ENCODE measurements at regions of chr2 and their contacts with region 1.

Region 1: GRCh38 chr2:223822818-223823217 is 14.6 kb downstream of the AP1S3 start:
- DNase-seq: no peak
- H3K4me3 ChIP-seq: no peak overlapping the region
- H3K27ac ChIP-seq: no peak overlapping the region
- H3K4me1 ChIP-seq: peaks cover 20% of the 10 kb centered on the region
- H3K27me3 ChIP-seq: no peaks in the 10 kb centered on the region
- CTCF ChIP-seq: no peak

Region 2: DNA sequence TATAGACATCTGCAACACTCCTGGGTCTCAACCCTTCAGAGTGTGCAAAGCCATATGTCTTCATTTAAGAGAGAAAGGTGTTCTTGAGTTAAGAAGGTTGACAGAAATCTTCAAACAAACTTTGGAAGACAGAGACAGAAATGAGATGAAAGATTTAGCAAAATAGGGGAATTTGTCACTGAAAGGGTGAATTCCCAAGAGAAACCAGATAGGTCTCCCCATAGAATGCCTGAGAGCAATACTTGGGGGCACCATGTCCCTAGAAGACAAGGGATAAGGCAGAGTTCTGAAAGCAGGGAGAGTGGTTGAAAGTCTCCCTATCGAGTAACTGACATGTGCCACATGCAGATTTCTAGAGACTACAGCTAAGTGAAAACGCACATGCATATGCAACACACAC is 35.5 kb before region 1 on chr2:
- CTCF ChIA-PET with region 1: no interaction called
- dilution Hi-C with region 1: no loop called
- in situ Hi-C with region 1: no loop called
- intact Hi-C with region 1: no loop called
- DNase-seq: no peak
- H3K4me3 ChIP-seq: no peak overlapping the region
- H3K27ac ChIP-seq: no peak overlapping the region
- H3K4me1 ChIP-seq: peaks cover 3% of the 10 kb centered on the region
- H3K27me3 ChIP-seq: no peaks in the 10 kb centered on the region
- CTCF ChIP-seq: no peak

Region 3: GRCh38 chr2:223837287-223838061 is 14.7 kb after region 1 on chr2 and contains the start of gene AP1S3:
- CTCF ChIA-PET with region 1: no interaction called
- dilution Hi-C with region 1: no loop called
- in situ Hi-C with region 1: no loop called
- intact Hi-C with region 1: loop called (anchors 2 kb)
- DNase-seq: peak; percentile 87
- H3K4me3 ChIP-seq: peak within 1 kb of the TSS; percentile 76 to 92 (median 78)
- H3K27ac ChIP-seq: peak within 1 kb of the TSS; percentile 41
- H3K4me1 ChIP-seq: peaks cover 26% of the 10 kb centered on the region
- H3K27me3 ChIP-seq: no peaks in the 10 kb centered on the region
- CTCF ChIP-seq: no peak
- total RNA-seq, gene AP1S3: 32.0 to 41.1 TPM